ENCODE measurements at regions of chr3 and their contacts with region 1.

Region 1: DNA sequence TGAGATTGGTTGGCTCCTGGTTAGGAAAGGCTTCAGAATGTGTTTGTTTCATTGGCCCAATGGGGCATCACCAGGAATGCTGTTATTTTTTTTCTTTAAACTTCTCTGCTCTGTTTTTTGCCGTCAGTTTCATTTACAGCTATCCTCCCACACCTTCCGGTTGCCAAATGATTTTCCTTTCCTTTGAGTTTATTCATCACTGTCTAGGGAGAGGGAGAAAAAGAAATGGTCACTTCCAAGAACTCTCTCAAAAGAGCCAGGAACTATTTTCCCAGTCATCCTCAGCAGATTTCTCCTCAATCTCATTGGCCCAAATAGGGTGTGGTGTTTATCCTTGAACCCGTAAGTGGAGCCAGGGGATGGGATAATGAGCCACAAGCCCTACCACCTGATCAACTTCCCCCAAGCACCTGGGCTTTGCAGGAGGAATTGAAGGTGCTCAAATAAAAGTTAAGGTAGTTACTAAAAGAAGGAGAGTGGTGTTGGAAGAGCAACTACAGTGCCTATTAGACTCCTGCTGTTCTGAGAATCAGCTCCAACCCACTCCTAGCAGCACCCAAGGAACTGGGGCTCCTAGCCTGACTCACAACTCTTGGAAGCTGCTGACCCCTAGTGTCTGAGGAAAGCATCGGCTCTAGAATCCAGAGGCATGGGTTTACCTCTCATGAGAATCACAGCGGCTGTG is 183.8 kb upstream of the IL12A start:
- H3K4me3 Mint-ChIP-seq: no peak overlapping the region
- H3K27ac Mint-ChIP-seq: no peak overlapping the region
- H3K4me1 Mint-ChIP-seq: no peaks in the 10 kb centered on the region
- H3K27me3 Mint-ChIP-seq: no peaks in the 10 kb centered on the region

Region 2: DNA sequence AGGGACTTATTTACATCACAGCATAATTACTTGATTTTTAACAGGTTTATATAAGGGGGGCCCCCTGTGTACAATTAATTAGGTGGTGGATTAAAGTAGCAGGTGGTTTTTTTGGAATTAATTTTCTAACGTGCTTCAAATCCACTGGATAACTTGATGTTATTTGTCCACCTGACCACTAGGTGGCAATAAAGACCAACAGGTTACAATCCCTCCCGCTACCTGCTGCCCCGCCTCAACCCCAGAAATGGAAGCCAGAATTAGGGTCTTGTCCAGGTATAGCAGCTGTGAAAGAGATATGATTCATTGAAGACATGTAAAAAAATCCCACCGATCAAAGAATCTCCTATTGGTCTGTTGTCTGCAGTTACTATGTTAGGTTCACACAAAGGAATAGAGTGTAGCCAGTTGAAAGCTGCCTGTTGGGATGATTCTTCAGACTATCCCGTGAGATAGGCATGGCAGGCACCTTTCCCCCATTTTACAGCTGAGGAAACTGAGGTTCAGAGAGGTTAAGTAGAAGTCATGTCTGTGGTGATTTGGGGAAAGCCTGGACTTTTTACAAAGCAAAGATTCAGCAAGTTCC is 959.0 kb before region 1 on chr3:
- intact Hi-C with region 1: loop called (anchors 10 kb)
- H3K4me3 Mint-ChIP-seq: no peak overlapping the region
- H3K27ac Mint-ChIP-seq: no peak overlapping the region
- H3K4me1 Mint-ChIP-seq: no peaks in the 10 kb centered on the region
- H3K27me3 Mint-ChIP-seq: peaks cover 4% of the 10 kb centered on the region

Region 3: GRCh38 chr3:158918008-158918407 is 886.9 kb before region 1 on chr3:
- intact Hi-C with region 1: loop called (anchors 5 kb)
- H3K4me3 Mint-ChIP-seq: no peak overlapping the region
- H3K27ac Mint-ChIP-seq: no peak overlapping the region
- H3K4me1 Mint-ChIP-seq: no peaks in the 10 kb centered on the region
- H3K27me3 Mint-ChIP-seq: no peaks in the 10 kb centered on the region

Region 4: DNA sequence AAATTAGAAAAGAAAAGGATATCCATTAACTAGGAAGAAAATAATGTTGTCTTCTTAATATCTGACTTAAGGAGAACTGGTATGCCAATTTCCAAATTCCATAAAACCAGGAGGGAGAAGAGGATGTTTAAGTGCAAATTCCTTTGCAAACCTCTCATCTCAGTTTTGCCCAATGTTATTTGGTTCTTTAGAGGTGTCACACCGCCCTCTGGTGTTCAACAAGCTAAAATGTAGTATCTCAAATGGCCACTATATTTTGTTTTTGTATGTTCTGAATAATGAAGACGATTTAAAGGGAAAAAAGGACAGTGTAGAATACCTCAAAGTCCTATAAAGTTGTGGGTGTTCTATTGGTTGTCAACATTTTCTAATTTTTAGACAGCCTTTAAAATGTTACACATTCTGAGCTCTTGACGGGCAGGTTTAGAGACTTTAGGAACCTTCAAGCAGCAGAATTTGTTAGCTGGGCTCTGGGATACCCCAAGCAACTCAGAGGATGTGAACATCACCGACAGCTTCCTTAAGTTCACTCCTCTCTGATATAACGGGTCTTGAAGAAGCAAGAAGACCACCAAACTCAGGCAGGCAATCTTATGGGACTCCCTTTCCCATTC is 544.7 kb before region 1 on chr3:
- intact Hi-C with region 1: loop called (anchors 2 kb)
- H3K4me3 Mint-ChIP-seq: no peak overlapping the region
- H3K27ac Mint-ChIP-seq: no peak overlapping the region
- H3K4me1 Mint-ChIP-seq: no peaks in the 10 kb centered on the region
- H3K27me3 Mint-ChIP-seq: peaks cover 3% of the 10 kb centered on the region

Region 5: GRCh38 chr3:159322322-159322939 is 482.4 kb before region 1 on chr3:
- intact Hi-C with region 1: loop called (anchors 1 kb)
- H3K4me3 Mint-ChIP-seq: no peak overlapping the region
- H3K27ac Mint-ChIP-seq: no peak overlapping the region
- H3K4me1 Mint-ChIP-seq: no peaks in the 10 kb centered on the region
- H3K27me3 Mint-ChIP-seq: no peaks in the 10 kb centered on the region

Region 6: GRCh38 chr3:159763602-159764489 is 41.0 kb before region 1 on chr3:
- intact Hi-C with region 1: no loop called
- H3K4me3 Mint-ChIP-seq: peak overlapping the region; percentile 87
- H3K27ac Mint-ChIP-seq: peak overlapping the region; percentile 56
- H3K4me1 Mint-ChIP-seq: peaks cover 25% of the 10 kb centered on the region
- H3K27me3 Mint-ChIP-seq: peaks cover 54% of the 10 kb centered on the region

Region 7: GRCh38 chr3:159787191-159787590 is 17.7 kb before region 1 on chr3:
- intact Hi-C with region 1: no loop called
- H3K4me3 Mint-ChIP-seq: no peak overlapping the region
- H3K27ac Mint-ChIP-seq: no peak overlapping the region
- H3K4me1 Mint-ChIP-seq: no peaks in the 10 kb centered on the region
- H3K27me3 Mint-ChIP-seq: no peaks in the 10 kb centered on the region

Measured in dendritic cell treated with granulocyte-macrophage colony-stimulating factor and Interleukin-4, amounts not matched to agents 40 ng/mL and 50 ng/mL, for 4 days (primary cell).